Activated CD4-positive, alpha-beta memory T cell treated with anti-CD3 and anti-CD28 coated beads for 36 hours (primary cell): ENCODE measurements at regions of chr6 and their contacts with region 1.

Region 1: GRCh38 chr6:87832025-87832825 is 130.2 kb upstream of the AKIRIN2 start:
- DNase-seq: no peak
- H3K4me3 Mint-ChIP-seq: peak overlapping the region; percentile 57
- H3K27ac Mint-ChIP-seq: peak overlapping the region; percentile 10
- H3K4me1 Mint-ChIP-seq: peaks cover 10% of the 10 kb centered on the region
- H3K27me3 Mint-ChIP-seq: no peaks in the 10 kb centered on the region

Region 2: DNA sequence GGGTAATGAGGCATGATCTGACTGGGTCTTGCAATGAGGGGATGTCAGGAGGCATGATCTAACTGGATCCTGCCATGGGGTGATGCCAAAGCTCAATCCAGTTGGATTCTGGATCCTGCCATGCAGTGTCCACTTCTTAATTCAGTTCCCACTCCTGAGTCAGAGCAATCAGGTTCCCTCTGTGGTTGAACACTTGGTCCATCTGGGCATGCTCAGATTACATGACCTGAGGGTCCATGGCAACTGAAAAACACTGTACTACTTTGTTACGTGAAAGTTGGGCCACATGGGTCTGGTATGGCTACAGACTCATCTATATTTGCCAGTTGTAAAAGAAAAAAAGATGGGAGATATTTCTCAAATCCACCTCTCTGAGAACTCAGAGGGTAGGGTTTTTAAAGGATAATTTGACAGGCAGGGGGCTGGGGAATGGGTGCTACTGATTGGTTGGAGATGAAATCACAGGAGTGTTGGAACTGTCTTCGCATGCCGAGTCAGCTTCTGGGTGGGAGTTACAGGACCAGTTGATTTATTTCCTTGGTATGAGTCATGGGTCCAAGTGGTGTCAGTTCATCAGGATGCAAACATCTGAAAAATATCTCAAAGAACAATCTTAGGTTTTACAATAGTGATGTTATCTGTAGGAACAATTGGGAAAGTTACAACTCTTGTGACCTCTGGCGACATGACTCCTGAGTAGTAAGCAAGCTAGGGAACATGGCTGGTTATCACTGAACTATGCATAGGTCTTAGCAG is 466.0 kb before region 1 on chr6:
- CTCF ChIA-PET with region 1: no interaction called
- POLR2A ChIA-PET with region 1: no interaction called
- intact Hi-C with region 1: no loop called
- DNase-seq: no peak
- H3K4me3 Mint-ChIP-seq: no peak overlapping the region
- H3K27ac Mint-ChIP-seq: no peak overlapping the region
- H3K4me1 Mint-ChIP-seq: no peaks in the 10 kb centered on the region
- H3K27me3 Mint-ChIP-seq: no peaks in the 10 kb centered on the region

Region 3: GRCh38 chr6:88165844-88166492 is 333.7 kb after region 1 on chr6 and contains the start of gene CNR1:
- CTCF ChIA-PET with region 1: no interaction called
- POLR2A ChIA-PET with region 1: no interaction called
- intact Hi-C with region 1: loop called (anchors 5 kb)
- DNase-seq: peak; percentile 27
- H3K4me3 Mint-ChIP-seq: peak within 1 kb of the TSS; percentile 50
- H3K27ac Mint-ChIP-seq: no peak within 1 kb of the TSS
- H3K4me1 Mint-ChIP-seq: peaks cover 9% of the 10 kb centered on the region
- H3K27me3 Mint-ChIP-seq: peaks cover 56% of the 10 kb centered on the region
- total RNA-seq, gene CNR1: not detected

Region 4: GRCh38 chr6:88780714-88781389 is 948.6 kb after region 1 on chr6:
- CTCF ChIA-PET with region 1: interaction called, 8 read pairs
- POLR2A ChIA-PET with region 1: no interaction called
- intact Hi-C with region 1: loop called (anchors 2 kb)
- DNase-seq: peak; percentile 55
- H3K4me3 Mint-ChIP-seq: no peak overlapping the region
- H3K27ac Mint-ChIP-seq: no peak overlapping the region
- H3K4me1 Mint-ChIP-seq: peaks cover 13% of the 10 kb centered on the region
- H3K27me3 Mint-ChIP-seq: no peaks in the 10 kb centered on the region